HAP-1 (cell line): ENCODE measurements at regions of chr9 and their contacts with region 1.

Region 1: GRCh38 chr9:93159601-93160471 is 24.1 kb upstream of the WNK2 start:
- DNase-seq: peak; percentile 77 to 93
- H3K4me3 ChIP-seq: no peak overlapping the region
- H3K4me1 ChIP-seq: no peaks in the 10 kb centered on the region
- H3K27me3 ChIP-seq: no peaks in the 10 kb centered on the region

Region 2: DNA sequence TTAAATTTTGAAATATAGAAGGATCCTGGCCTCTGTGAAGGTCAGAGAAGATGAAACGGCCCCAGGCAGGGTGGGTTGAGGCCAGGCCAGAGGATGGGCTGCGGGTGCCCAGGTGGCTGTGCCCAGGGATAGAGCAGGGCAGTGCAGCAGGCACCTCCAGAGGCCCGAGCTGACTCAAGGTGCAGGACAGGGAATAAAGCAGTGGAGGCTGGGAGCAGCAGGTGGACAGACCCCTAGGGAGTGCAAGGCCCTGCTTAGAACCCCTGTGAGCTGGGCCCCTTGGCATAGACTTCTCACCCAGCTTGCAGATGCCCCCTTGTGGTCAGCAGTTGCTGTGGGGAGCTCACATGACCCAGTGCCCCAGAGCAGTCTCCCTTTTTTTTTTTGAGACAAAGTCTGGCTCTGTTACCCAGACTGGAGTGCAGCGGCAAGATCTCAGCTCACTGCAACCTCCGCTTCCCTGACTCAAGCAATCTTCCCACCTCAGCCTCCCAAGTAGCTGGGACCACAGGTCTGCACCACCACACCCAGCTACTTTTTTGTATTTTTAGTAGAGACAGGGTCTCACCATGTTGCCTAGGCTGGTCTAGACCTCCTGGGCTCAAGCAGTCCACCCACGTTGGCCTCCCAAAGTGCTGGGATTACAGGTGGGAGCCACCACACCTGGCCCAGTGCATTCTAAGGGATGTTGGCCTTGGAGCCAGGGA is 142.9 kb after region 1 on chr9:
- in situ Hi-C with region 1: loop called (anchors 5 kb)
- DNase-seq: peak in 1 of 2 experiments; percentile 76
- H3K4me3 ChIP-seq: no peak overlapping the region
- H3K4me1 ChIP-seq: no peaks in the 10 kb centered on the region
- H3K27me3 ChIP-seq: no peaks in the 10 kb centered on the region

Region 3: DNA sequence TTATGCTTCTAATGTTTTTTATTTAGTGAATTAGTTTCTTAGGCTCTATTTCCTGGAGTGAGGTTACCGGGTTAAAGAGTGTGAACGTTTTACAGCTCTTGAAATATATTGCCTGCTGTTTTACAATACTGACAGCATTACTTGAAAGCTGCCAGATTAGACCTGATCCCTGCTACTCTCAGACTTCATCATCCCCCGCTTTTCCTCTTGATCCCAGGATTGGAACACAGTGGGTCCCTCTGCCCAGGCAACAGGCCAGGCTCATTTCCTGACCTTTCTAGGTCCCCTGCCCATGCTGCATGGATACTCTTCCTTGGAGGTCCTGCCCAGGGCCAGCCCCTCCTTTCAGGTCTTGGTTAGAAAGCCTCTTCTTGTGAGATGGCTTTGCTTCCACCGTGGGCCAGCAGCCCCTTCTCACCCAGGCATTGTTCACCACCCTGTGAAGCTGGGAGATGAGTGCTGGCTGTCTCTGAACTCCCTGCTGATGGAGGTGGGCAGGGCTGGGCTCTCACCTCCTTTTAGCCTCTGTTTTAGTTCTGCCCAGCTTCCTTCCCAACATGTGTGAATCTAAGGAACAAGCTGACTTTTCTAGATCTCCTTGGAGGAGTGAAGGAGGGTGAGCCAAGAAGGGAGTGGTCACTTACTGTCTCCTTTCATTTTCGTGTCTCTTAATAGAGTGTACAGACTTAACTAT is 309.1 kb after region 1 on chr9:
- in situ Hi-C with region 1: no loop called
- DNase-seq: no peak
- H3K4me3 ChIP-seq: no peak overlapping the region
- H3K4me1 ChIP-seq: peaks cover 51% of the 10 kb centered on the region
- H3K27me3 ChIP-seq: no peaks in the 10 kb centered on the region

Region 4: DNA sequence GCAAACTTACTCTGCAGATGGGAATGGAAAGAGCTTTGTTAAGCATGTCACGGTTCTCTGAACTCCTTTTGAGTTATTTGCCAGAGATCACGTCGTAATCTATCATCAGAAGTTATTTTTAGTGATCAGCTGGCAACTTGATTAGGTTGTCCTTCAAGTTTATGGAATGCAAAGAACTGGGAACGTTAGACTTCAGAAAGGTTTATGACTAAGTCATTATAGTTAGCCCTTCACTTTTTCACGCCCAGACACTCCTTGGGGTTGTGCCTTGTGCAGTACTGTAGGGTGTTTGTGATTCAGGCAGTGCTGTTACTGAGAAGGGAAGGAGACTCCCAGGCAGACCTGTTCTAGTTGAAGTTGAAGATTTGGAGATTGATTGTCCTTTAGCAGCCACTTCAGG is 389.8 kb after region 1 on chr9:
- in situ Hi-C with region 1: no loop called
- DNase-seq: peak in 1 of 2 experiments; percentile 34
- H3K4me3 ChIP-seq: no peak overlapping the region
- H3K4me1 ChIP-seq: peaks cover 9% of the 10 kb centered on the region
- H3K27me3 ChIP-seq: no peaks in the 10 kb centered on the region